Activated naive CD4-positive, alpha-beta T cell treated with anti-CD3 and anti-CD28 coated beads for 36 hours (primary cell): ENCODE measurements at regions of chr2 and their contacts with region 1.

Region 1: GRCh38 chr2:38377050-38377828 is at the start of gene ATL2:
- DNase-seq: peak; percentile 96
- H3K4me3 Mint-ChIP-seq: peak within 1 kb of the TSS; percentile 90
- H3K27ac Mint-ChIP-seq: peak within 1 kb of the TSS; percentile 78
- H3K4me1 Mint-ChIP-seq: peaks cover 55% of the 10 kb centered on the region
- H3K27me3 Mint-ChIP-seq: no peaks in the 10 kb centered on the region
- total RNA-seq, gene ATL2: 54.6 to 55.9 TPM

Region 2: DNA sequence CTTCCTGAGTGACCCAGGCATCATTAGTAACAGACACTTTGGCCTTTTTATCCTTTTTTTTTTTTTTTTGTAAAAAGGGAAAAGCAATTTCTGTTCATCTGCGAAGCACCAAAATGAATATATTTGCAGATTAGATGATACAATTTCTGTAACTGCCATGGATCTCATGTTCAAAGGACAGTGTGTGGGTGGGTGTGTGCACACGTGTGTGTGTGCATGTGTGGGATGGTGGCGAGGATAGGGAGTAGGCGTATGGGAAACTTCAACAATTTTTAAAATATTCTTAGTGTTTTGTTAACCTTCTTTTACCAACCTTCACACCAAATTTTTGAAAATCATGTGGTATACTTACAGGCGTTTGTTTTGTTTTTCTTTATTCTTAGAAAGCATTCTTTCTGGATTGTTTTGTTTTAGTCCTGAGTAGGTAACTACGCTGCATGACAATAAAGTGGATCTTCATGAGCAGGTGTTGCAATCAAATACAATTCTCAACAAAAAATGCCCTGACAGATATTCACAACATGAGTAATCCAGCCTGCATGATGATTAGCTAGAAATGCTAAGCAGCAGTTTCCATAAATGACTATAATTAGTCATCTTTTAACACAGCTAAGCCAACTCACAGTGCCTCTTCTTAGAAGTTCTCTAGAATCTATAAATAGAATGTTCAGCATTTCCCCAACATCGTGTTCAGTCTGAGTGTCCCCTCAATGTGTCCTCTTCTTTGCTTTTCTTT is 505.6 kb before region 1 on chr2:
- CTCF ChIA-PET with region 1: no interaction called
- intact Hi-C with region 1: loop called (anchors 1 kb)
- DNase-seq: no peak
- H3K4me3 Mint-ChIP-seq: peak overlapping the region; percentile 25
- H3K27ac Mint-ChIP-seq: peak overlapping the region; percentile 86
- H3K4me1 Mint-ChIP-seq: peaks cover 30% of the 10 kb centered on the region
- H3K27me3 Mint-ChIP-seq: peaks cover 12% of the 10 kb centered on the region

Region 3: DNA sequence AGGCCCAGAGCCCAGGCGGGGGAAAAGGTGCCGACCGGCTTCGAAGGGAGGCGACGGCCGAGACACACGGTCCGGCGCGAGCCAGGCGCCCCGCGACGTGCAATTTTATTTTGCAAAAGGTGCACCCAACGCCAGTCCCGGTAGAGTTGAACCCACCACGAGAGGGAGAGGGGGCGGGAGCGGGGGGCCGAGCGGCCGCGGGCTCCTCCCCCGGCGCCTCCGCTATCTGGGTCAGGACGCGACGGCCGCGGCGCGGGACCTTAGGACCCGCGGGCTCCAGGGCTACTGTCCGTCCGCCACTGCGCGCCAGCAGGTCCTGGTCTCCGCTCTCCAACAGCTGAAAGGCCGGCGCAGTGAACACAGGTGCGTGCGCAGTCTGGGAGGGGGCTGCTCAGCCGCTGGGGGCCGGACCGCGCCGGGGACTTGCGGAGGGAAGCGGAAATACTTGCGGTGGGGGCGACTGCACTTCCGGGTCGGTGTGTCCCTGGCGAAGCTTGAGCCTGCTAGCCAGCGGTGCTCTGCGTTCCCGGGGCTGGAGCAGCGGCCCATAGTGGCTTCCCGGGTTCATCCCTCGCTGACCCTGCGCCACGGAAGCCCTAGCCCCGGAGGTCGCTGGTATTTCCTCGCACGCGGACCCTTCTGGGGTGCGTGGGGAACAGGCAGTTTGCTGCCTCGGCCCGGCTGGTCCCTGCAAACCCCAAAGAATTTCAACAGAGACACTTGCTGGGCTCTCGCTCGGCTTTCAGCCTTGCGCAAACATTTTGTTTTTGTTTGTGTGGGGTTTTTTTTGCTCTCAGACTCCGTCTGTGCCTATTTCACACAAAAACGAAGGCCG is 452.0 kb before region 1 on chr2 and contains the start of gene RMDN2:
- CTCF ChIA-PET with region 1: no interaction called
- intact Hi-C with region 1: no loop called
- DNase-seq: peak; percentile 83
- H3K4me3 Mint-ChIP-seq: peak within 1 kb of the TSS; percentile 81
- H3K27ac Mint-ChIP-seq: peak within 1 kb of the TSS; percentile 68
- H3K4me1 Mint-ChIP-seq: peaks cover 8% of the 10 kb centered on the region
- H3K27me3 Mint-ChIP-seq: no peaks in the 10 kb centered on the region
- total RNA-seq, gene RMDN2: 0.79 to 1.2 TPM

Region 4: DNA sequence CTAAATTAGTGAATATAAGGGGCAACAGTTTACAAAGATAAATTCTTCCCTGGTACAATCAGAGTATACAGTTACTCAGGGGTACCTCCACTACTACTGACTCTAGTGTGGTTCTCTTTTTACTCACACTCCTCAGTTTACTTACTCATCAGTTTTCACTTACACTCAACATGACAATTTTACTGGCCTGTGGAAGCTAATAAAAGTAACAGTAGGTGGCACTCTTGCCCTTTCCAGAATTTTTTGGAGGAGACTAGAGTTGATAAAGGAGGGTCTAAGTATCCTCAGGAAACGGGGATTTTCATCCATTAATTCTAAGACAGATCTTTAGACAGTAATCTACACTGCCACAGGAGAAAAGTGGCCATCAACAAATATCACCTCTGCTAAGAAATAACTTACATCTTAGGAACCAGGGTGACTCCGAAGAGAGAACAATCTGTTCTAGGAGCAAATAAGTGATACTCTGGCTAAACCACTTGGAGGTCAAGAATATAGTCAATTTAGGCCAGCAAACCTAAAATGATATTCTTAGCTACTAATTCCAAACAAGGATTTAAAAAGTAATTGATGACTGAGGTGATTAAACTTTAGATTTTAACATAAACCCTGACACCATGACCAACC is 61.4 kb before region 1 on chr2:
- CTCF ChIA-PET with region 1: interaction called, 13 read pairs
- intact Hi-C with region 1: loop called (anchors 1 kb)
- DNase-seq: peak; percentile 32
- H3K4me3 Mint-ChIP-seq: no peak overlapping the region
- H3K27ac Mint-ChIP-seq: no peak overlapping the region
- H3K4me1 Mint-ChIP-seq: peaks cover 12% of the 10 kb centered on the region
- H3K27me3 Mint-ChIP-seq: no peaks in the 10 kb centered on the region

Region 5: GRCh38 chr2:38508311-38509039 is 131.2 kb after region 1 on chr2:
- CTCF ChIA-PET with region 1: interaction called, 23 read pairs
- intact Hi-C with region 1: loop called (anchors 1 kb)
- DNase-seq: peak; percentile 93
- H3K4me3 Mint-ChIP-seq: no peak overlapping the region
- H3K27ac Mint-ChIP-seq: no peak overlapping the region
- H3K4me1 Mint-ChIP-seq: no peaks in the 10 kb centered on the region
- H3K27me3 Mint-ChIP-seq: no peaks in the 10 kb centered on the region

Region 6: DNA sequence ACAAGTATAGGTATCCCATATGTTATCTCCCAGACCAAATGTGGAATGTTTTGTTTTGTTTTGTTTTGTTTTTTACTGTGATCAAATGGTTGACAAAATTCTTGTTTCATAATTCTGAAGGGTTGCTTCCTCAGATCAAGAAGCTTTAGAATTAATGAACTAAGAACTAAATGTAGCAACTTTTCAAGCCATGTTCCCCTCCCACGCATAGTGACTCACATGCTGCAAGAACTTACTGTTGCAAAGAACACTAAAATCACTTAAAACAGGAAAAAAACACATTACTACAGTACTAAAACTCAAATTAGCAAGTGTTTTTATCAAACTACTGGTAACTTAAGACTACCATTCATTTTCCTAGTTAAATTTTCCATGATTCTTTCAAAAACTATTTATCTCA is 194.9 kb after region 1 on chr2:
- CTCF ChIA-PET with region 1: no interaction called
- intact Hi-C with region 1: no loop called
- DNase-seq: peak; percentile 68
- H3K4me3 Mint-ChIP-seq: no peak overlapping the region
- H3K27ac Mint-ChIP-seq: no peak overlapping the region
- H3K4me1 Mint-ChIP-seq: peaks cover 17% of the 10 kb centered on the region
- H3K27me3 Mint-ChIP-seq: no peaks in the 10 kb centered on the region

Region 7: DNA sequence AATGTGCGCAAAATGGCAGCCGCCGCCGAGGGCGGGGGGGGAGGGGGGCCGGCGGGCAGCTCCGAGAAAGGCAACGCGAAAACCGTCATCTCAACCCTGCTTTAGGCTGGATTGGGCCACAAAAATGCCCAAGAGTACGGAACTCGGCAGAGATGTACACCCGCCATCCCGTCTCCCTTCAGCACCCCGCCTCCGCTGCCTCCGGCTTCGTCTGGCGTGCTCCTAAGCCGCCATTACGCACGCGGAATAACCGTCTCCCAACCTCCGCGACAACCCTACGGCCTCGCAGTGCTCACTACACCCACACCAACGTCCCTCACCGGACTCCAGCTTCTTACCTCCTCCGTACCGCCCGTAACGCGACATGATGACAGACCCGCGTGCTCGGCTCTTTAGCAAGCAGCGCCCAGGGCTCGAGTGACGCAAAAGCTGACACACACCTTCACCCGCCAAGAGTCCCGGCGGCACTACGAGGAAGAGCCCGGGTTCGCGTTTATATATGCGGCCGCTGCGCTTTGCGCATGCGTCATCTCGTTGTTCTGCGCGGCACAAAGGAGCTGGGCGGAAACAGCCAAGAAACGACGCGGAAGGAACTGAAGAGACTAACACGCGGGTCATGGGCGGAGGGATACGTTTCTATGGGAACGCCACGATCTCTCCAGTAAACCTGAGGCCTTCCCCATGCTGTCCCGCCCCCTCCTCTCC is 373.8 kb after region 1 on chr2 and contains the start of gene SRSF7:
- CTCF ChIA-PET with region 1: no interaction called
- intact Hi-C with region 1: loop called (anchors 1 kb)
- DNase-seq: peak; percentile 97
- H3K4me3 Mint-ChIP-seq: peak within 1 kb of the TSS; percentile 100
- H3K27ac Mint-ChIP-seq: peak within 1 kb of the TSS; percentile 100
- H3K4me1 Mint-ChIP-seq: peaks cover 52% of the 10 kb centered on the region
- H3K27me3 Mint-ChIP-seq: peaks cover 3% of the 10 kb centered on the region
- total RNA-seq, gene SRSF7: 212 to 217 TPM

Region 8: GRCh38 chr2:38875576-38876367 is 498.5 kb after region 1 on chr2 and contains the starts of genes DHX57 and MORN2:
- CTCF ChIA-PET with region 1: no interaction called
- intact Hi-C with region 1: loop called (anchors 2 kb)
- DNase-seq: peak; percentile 88
- H3K4me3 Mint-ChIP-seq: peak within 1 kb of the TSS; percentile 85
- H3K27ac Mint-ChIP-seq: peak within 1 kb of the TSS; percentile 77
- H3K4me1 Mint-ChIP-seq: peaks cover 24% of the 10 kb centered on the region
- H3K27me3 Mint-ChIP-seq: no peaks in the 10 kb centered on the region
- total RNA-seq, gene DHX57: 10.8 to 12.5 TPM
- total RNA-seq, gene MORN2: 5.1 to 6.2 TPM